ENCODE measurements at regions of chr13 and their contacts with region 1.

Region 1: GRCh38 chr13:33542283-33543088 is 256.9 kb upstream of the STARD13 start:
- DNase-seq: peak; percentile 99
- ATAC-seq: peak; percentile 98
- H3K4me3 ChIP-seq: peak overlapping the region; percentile 54 to 75
- H3K27ac ChIP-seq: peak overlapping the region; percentile 95 to 100
- H3K4me1 ChIP-seq: peaks cover 2 to 7% of the 10 kb centered on the region in 2 donors
- H3K27me3 ChIP-seq: no peaks in the 10 kb centered on the region

Region 2: GRCh38 chr13:32969516-32969941 is 573.0 kb before region 1 on chr13:
- intact Hi-C with region 1: loop called in 1 of 2 experiments (anchors 5 kb)
- DNase-seq: peak in 1 of 2 donors; percentile 60
- ATAC-seq: peak; percentile 75
- H3K4me3 ChIP-seq: peak overlapping the region; percentile 45 to 82
- H3K27ac ChIP-seq: peak overlapping the region in 1 of 2 donors; percentile 63
- H3K4me1 ChIP-seq: no peaks in the 10 kb centered on the region
- H3K27me3 ChIP-seq: no peaks in the 10 kb centered on the region

Region 3: DNA sequence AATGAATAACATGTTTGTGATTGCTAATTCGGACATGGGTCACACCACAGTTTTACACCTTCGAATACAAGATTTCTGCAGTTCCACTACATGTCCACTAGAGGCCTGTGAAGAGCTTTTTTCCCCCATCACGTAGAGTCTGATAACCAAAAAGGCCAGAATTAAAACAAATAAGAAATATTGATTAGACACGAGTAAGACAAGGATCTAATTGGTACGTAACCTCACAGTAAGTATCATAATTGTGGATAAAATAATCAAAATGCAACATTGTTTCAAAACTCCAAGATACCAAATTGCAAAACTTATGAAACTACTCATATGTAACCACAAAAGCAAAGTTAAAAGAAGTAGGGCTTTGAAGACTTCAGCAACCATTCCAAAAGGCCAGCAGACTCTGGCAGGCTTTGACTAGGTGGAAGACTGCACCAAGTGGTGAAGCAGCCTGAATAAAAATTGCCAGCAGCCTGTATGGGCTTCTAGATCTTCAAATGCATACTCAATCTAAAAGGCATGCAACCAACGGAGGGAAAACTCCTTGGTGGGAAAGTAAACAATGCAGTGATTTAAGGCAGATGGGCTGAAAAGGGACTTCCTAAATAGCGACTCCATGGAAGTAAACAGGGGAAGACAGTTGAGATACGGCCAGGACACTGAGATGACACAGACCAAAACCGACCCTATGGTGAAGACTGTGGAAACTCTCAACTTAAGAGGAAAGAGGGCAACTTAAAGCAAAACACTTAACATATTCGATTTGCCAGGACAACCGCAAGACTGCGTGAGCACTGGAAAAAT is 313.6 kb before region 1 on chr13:
- intact Hi-C with region 1: loop called (anchors 2 to 10 kb)
- DNase-seq: no peak
- ATAC-seq: peak; percentile 74
- H3K4me3 ChIP-seq: no peak overlapping the region
- H3K27ac ChIP-seq: no peak overlapping the region
- H3K4me1 ChIP-seq: peaks cover 0 to 1% of the 10 kb centered on the region in 2 donors
- H3K27me3 ChIP-seq: no peaks in the 10 kb centered on the region

Region 4: DNA sequence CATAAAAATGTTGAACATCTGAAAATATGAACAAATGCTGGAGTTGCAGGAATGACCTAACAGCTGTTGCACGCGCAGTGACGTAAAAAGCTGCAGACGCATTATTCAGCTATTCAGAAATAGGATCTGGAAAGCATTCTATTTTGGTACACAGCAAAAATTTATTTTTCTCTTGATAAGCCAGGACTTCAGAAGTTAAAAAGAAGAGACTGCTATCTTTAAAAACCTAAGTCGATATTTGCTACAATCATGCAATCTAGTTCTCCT is 220.0 kb before region 1 on chr13:
- intact Hi-C with region 1: no loop called
- DNase-seq: peak; percentile 73 to 84
- ATAC-seq: peak; percentile 74
- H3K4me3 ChIP-seq: peak overlapping the region; percentile 17 to 82
- H3K27ac ChIP-seq: no peak overlapping the region
- H3K4me1 ChIP-seq: peaks cover 4 to 7% of the 10 kb centered on the region in 2 donors
- H3K27me3 ChIP-seq: no peaks in the 10 kb centered on the region

Region 5: GRCh38 chr13:33349986-33350826 is 192.3 kb before region 1 on chr13:
- intact Hi-C with region 1: loop called in 1 of 2 experiments (anchors 10 kb)
- DNase-seq: peak; percentile 81 to 89
- ATAC-seq: peak; percentile 85
- H3K4me3 ChIP-seq: peak overlapping the region; percentile 74 to 84
- H3K27ac ChIP-seq: peak overlapping the region; percentile 33 to 84
- H3K4me1 ChIP-seq: no peaks in the 10 kb centered on the region
- H3K27me3 ChIP-seq: no peaks in the 10 kb centered on the region

Region 6: GRCh38 chr13:33494596-33495204 is 47.8 kb before region 1 on chr13:
- intact Hi-C with region 1: loop called (anchors 5 kb)
- DNase-seq: peak in 1 of 2 donors; percentile 49
- ATAC-seq: peak; percentile 65
- H3K4me3 ChIP-seq: no peak overlapping the region
- H3K27ac ChIP-seq: no peak overlapping the region
- H3K4me1 ChIP-seq: peaks cover 5 to 13% of the 10 kb centered on the region in 2 donors
- H3K27me3 ChIP-seq: no peaks in the 10 kb centered on the region

Region 7: DNA sequence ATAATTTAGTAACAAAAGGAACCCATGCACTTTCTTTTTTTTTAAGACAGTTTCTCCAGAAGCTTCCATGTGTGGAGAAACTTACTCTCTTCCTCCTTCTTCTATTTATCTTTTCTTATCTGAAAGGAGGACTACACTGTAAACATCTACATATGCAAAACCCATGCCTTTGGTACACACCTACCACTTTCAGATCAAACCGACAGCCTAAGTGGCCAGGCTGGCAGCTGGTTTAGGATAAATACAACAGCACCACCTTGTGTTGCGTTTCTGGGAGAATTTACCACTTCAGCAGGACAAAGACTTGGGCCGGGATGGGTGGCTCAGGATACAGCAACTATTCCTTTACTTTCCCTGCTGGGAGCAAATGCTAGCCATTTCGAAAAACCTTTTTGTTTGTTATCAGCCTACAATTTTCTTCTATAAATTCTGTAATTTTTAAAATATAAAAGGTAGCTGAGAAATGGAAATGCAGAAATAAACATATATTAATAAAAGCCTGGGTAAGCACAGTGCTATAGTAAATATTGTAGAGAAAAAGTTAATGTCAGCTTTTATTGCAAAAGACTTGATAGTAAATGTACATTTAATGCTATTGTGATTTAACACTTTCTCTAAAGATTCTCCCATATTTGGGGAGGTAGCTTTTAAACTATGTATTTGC is 181.4 kb after region 1 on chr13:
- intact Hi-C with region 1: loop called (anchors 5 kb)
- DNase-seq: peak in 1 of 2 donors; percentile 82
- ATAC-seq: peak; percentile 87
- H3K4me3 ChIP-seq: no peak overlapping the region
- H3K27ac ChIP-seq: no peak overlapping the region
- H3K4me1 ChIP-seq: no peaks in the 10 kb centered on the region
- H3K27me3 ChIP-seq: no peaks in the 10 kb centered on the region

Measured in aorta (tissue), 5 donors.